ENCODE measurements at regions of chr17 and their contacts with region 1.

Region 1: DNA sequence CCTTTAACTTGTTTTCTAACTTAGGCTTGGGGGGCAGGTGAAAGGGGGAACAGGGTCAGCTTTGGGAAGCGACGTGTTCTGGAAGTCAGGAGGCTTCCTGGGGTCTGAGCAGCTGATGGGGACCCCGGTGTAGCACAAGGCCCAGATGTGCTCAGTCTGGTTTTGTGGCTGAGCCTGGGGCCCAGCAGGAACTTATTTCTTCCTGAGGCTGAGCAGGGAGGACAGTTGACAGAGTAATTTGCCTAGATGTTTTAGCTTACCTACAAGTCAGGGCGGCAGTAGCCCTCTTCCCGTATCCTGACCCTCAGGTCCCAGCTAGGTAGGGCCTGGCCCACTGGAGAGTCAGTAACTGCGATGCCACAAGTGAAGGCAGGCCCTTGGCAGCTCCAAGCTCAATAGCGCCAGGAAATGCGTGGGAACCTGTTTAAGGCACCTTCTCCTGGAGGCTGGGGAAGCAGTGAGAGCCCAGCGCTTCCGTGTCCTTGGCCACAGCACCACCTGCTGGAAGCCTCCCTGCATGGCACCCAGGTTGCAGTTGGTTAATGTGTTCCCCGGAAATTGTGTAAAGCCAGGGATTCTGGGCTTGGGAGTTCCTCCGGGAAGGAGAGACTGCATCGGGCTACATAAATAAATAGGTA is 5.2 kb downstream of the CCR7 start:
- DNase-seq: peak; percentile 86
- ATAC-seq: peak; percentile 13
- H3K4me3 Mint-ChIP-seq: peak overlapping the region; percentile 96
- H3K27ac Mint-ChIP-seq: peak overlapping the region; percentile 99
- H3K4me1 Mint-ChIP-seq: peaks cover 61% of the 10 kb centered on the region
- H3K27me3 Mint-ChIP-seq: no peaks in the 10 kb centered on the region
- CTCF ChIP-seq: peak; percentile 98

Region 2: DNA sequence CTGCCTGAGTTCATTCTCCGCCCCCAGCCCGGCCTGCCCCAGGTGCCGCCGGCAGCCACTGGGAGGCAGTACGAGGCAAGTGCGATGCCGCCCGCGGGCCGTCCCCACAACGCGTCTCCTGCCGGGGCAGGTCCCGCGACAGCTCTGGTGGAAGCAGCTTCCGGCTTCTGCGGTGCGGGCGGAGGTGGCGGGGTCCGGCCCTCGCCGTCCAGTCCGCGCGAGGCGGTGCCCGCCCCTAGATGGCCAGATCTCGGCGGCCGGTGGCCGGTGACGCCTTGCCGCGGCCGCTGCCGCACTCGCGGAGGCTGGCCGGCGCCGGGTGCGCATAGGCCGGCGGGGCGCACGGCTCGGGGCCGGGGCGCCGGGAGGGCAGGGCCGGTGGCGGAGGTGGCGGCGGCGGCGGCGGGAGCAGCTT is 197.4 kb before region 1 on chr17:
- CTCF ChIA-PET with region 1: interaction called, 17 read pairs
- POLR2A ChIA-PET with region 1: interaction called, 6 read pairs
- intact Hi-C with region 1: no loop called
- DNase-seq: peak; percentile 93
- ATAC-seq: peak; percentile 90
- H3K4me3 Mint-ChIP-seq: peak overlapping the region; percentile 72
- H3K27ac Mint-ChIP-seq: no peak overlapping the region
- H3K4me1 Mint-ChIP-seq: peaks cover 6% of the 10 kb centered on the region
- H3K27me3 Mint-ChIP-seq: peaks cover 4% of the 10 kb centered on the region
- CTCF ChIP-seq: peak; percentile 88

Region 3: DNA sequence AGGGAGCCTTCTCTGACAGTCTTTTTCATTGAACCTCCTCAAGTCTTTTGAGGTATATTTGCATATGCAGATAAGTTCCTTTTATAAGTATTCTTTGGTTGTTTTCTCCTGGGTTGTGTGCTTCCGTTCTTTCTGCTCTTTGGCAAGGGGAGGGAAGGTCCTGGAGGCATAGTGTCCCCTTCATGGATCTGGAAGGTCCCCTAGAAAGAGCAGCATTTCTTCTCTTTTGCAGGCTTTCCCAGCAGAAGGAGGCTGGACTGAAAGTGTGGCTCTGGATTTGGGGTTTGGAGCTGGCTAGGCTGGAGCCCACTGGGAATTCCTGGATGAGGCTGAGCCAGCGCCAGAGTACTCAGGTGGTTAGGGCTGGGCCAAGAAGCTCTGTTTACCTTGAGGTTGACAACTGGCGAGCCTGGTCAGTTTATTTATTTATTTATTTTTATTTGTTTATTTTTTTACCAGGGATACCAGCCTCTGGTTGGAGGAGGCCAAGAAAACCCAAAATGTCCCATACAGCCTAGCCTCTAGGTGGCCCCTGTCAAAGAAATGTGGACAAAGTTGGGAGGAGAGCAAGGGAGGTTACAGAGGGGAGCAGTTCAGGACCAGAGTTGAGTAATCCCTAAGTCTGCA is 137.0 kb before region 1 on chr17:
- CTCF ChIA-PET with region 1: interaction called, 32 read pairs
- POLR2A ChIA-PET with region 1: interaction called, 3 read pairs
- intact Hi-C with region 1: no loop called
- DNase-seq: no peak
- ATAC-seq: no peak
- H3K4me3 Mint-ChIP-seq: no peak overlapping the region
- H3K27ac Mint-ChIP-seq: no peak overlapping the region
- H3K4me1 Mint-ChIP-seq: peaks cover 37% of the 10 kb centered on the region
- H3K27me3 Mint-ChIP-seq: no peaks in the 10 kb centered on the region
- CTCF ChIP-seq: no peak

Region 4: GRCh38 chr17:40582328-40582901 is 22.3 kb after region 1 on chr17:
- CTCF ChIA-PET with region 1: interaction called, 22 read pairs
- POLR2A ChIA-PET with region 1: interaction called, 74 read pairs
- intact Hi-C with region 1: loop called (anchors 2 kb)
- DNase-seq: peak; percentile 84
- ATAC-seq: peak; percentile 49
- H3K4me3 Mint-ChIP-seq: peak overlapping the region; percentile 62
- H3K27ac Mint-ChIP-seq: peak overlapping the region; percentile 88
- H3K4me1 Mint-ChIP-seq: peaks cover 92% of the 10 kb centered on the region
- H3K27me3 Mint-ChIP-seq: no peaks in the 10 kb centered on the region
- CTCF ChIP-seq: no peak

Region 5: GRCh38 chr17:40615295-40615988 is 55.4 kb after region 1 on chr17:
- CTCF ChIA-PET with region 1: interaction called, 336 read pairs
- POLR2A ChIA-PET with region 1: interaction called, 787 read pairs
- intact Hi-C with region 1: loop called (anchors 2 kb)
- DNase-seq: peak; percentile 58
- ATAC-seq: peak; percentile 44
- H3K4me3 Mint-ChIP-seq: peak overlapping the region; percentile 65
- H3K27ac Mint-ChIP-seq: peak overlapping the region; percentile 92
- H3K4me1 Mint-ChIP-seq: peaks cover 81% of the 10 kb centered on the region
- H3K27me3 Mint-ChIP-seq: no peaks in the 10 kb centered on the region
- CTCF ChIP-seq: peak; percentile 43

Measured in activated CD8-positive, alpha-beta T cell treated with anti-CD3 and anti-CD28 coated beads for 36 hours (primary cell).